Esophagus muscularis mucosa (tissue), 4 donors: ENCODE measurements at regions of chr12 and their contacts with region 1.

Region 1: DNA sequence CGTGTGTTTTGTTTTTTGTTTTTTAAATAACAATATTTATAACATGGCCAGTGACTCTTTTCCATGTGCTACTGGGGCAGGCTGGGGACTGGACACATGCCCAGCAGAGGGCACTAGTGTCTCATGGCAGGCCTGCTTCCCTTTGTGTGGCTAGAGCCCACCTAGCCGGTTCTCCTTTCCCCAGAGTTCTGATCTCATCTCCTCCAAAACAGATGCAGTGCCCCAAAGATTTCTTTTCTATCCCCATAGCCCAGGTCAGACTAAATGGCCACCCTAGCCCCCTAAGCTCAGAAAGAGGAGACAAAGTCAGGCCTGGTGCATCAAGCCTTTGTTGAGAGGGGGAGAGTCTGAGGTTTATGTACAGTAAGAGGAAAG is 21.2 kb downstream of the PRPF40B start:
- DNase-seq: peak; percentile 94
- H3K4me3 ChIP-seq: no peak overlapping the region
- H3K27ac ChIP-seq: peak overlapping the region in 1 of 4 donors; percentile 6
- H3K4me1 ChIP-seq: peaks cover 29 to 45% (median 37%) of the 10 kb centered on the region in 4 donors
- H3K27me3 ChIP-seq: no peaks in the 10 kb centered on the region
- CTCF ChIP-seq: peak; percentile 89 to 97 (median 95)
- EP300 ChIP-seq: no peak
- POLR2A ChIP-seq: no peak

Region 2: GRCh38 chr12:49548822-49549648 is 95.6 kb before region 1 on chr12:
- intact Hi-C with region 1: no loop called
- DNase-seq: no peak
- H3K4me3 ChIP-seq: peak overlapping the region; percentile 45 to 57 (median 49)
- H3K27ac ChIP-seq: no peak overlapping the region
- H3K4me1 ChIP-seq: peaks cover 13 to 18% (median 16%) of the 10 kb centered on the region in 4 donors
- H3K27me3 ChIP-seq: peaks cover 0 to 61% (median 5%) of the 10 kb centered on the region in 4 donors
- CTCF ChIP-seq: peak; percentile 29 to 56 (median 45)
- EP300 ChIP-seq: no peak
- POLR2A ChIP-seq: no peak

Region 3: DNA sequence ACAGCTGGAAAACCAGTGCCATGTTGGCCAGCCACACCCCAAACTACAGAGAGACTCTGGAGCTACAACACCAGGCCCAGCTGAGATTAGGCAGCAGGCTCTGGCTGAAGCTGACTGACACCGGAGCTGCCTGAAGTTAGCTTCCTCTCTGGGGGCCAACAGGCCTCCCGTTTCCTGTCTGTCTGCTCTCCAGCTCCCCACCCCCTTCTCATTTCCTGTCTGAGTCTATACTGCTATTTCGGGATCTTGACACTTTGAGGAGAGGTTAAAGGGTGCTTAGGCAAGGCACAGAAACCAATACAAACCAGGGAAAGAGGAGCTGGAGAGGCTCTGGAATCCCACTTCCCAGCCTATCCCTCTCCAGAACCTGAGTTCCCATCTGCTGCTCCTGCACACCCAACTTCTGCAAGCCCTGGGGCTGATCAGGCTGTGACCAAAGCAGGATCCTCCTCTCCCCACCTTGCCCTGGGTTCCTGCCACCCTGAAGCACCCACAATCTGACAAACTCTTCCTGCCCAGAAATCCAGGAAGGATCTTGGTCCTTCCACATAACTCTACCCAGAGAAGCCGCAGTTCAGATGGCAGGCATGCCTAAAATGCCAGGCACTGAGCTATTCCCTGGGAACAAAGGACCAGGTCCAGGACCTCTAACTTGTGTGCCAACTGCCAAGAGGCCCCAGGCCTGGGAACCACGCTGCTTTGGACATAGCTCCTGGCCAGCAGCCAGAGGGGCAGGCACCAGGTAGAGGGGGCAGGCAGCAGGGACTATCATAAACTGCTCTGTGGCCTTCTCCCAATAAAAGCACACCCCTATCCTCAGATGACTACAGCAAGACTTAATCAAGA is 18.6 kb after region 1 on chr12:
- intact Hi-C with region 1: no loop called
- DNase-seq: no peak
- H3K4me3 ChIP-seq: no peak overlapping the region
- H3K27ac ChIP-seq: peak overlapping the region; percentile 56 to 73 (median 61)
- H3K4me1 ChIP-seq: peaks cover 38 to 74% (median 51%) of the 10 kb centered on the region in 4 donors
- H3K27me3 ChIP-seq: no peaks in the 10 kb centered on the region
- CTCF ChIP-seq: no peak
- EP300 ChIP-seq: no peak
- POLR2A ChIP-seq: no peak

Region 4: GRCh38 chr12:49707128-49707811 is 62.7 kb after region 1 on chr12 and contains the start of gene FMNL3:
- intact Hi-C with region 1: loop called (anchors 1 kb)
- DNase-seq: peak; percentile 99
- H3K4me3 ChIP-seq: peak within 1 kb of the TSS; percentile 68 to 79 (median 76)
- H3K27ac ChIP-seq: peak within 1 kb of the TSS; percentile 83 to 86 (median 84)
- H3K4me1 ChIP-seq: peaks cover 12 to 44% (median 37%) of the 10 kb centered on the region in 4 donors
- H3K27me3 ChIP-seq: peaks cover 0 to 4% (median 0%) of the 10 kb centered on the region in 4 donors
- CTCF ChIP-seq: peak; percentile 92 to 100 (median 99)
- EP300 ChIP-seq: no peak
- POLR2A ChIP-seq: no peak
- total RNA-seq, gene FMNL3: 9.6 to 14.6 (median 12.8) TPM